Activated CD4-positive, alpha-beta T cell treated with anti-CD3 and anti-CD28 coated beads, Interleukin-2, amount 10 ng/mL, durations not matched to agents 7 days and 5 days (primary cell): ENCODE measurements at regions of chr16 and their contacts with region 1.

Region 1: DNA sequence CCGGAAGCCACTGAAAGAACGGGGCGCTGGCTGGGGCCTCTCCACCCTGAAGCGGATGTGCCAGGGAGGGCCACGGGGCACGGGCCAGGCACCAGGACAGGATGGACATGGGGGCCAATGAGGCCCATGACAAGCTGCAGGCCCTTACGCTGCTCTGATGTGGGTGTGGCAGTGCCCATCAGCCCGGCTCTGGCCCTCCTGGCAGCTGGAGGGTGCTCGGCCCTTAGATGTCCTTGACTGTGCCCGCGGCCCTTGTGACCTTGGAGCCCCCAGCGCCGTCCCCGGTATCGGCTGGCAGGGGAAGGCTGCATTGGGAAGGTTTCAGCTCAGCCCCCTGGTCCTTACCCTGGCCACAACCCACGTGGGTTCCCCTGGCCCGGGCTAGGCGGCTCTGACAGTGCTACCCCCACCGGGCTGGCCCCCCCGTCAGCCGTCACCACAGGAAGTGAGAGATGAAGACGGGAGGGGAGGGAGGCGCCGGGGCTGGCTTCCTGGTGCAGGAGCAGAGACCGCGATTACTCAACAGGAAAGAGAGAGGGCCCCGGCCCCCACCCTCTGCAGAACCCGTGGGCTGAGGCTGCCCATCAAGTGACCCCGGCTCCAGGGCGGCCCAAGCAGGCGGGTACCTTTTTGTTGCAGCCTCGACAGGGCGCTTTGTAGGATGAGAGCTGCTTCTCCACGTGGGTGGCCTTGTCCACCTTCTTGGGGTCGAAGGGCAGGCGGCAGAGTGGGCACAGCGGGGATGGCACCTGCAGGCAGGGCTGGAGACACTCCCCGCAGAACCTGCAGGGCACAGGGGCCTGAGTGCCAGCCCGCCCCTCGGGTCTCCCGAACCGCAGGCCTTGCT is 5.3 kb downstream of the RNF166 start:
- DNase-seq: peak; percentile 97
- H3K4me3 Mint-ChIP-seq: peak overlapping the region; percentile 85
- H3K27ac Mint-ChIP-seq: peak overlapping the region; percentile 98
- H3K4me1 Mint-ChIP-seq: peaks cover 60% of the 10 kb centered on the region
- H3K27me3 Mint-ChIP-seq: no peaks in the 10 kb centered on the region

Region 2: GRCh38 chr16:88688013-88688778 is 12.7 kb before region 1 on chr16:
- CTCF ChIA-PET with region 1: interaction called, 11 read pairs
- POLR2A ChIA-PET with region 1: interaction called, 5 read pairs
- DNase-seq: no peak
- H3K4me3 Mint-ChIP-seq: no peak overlapping the region
- H3K27ac Mint-ChIP-seq: peak overlapping the region; percentile 31
- H3K4me1 Mint-ChIP-seq: peaks cover 77% of the 10 kb centered on the region
- H3K27me3 Mint-ChIP-seq: no peaks in the 10 kb centered on the region